Natural killer cell (primary cell): ENCODE measurements at regions of chr2 and their contacts with region 1.

Region 1: DNA sequence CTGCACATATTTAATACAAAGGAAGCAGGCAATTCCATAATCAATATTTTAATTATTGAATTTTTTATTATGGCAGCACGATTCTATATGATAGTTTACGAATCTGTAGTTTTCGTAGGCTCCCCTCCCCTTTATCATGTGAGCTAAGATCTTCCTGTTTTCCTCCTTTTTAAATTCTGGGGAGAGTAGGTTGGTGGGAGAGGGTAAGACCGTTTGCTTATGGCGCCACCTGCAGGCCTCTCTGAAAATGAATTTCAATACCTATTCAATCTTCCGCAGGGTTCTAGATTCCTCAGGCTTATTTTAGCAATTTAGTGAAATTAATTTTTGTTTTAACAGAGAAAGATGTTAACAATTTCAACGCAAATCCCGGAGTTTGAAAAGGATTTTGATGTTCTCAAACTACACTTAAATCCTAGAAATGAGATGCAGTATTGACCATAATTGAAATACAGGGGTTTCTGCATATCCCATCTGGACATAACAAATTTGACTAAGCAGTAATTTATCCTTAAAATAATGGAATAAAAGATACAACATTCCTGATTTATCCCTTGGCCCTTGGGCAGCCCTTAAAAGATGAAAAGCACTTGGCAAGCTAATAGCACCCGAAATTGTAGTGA is 12.8 kb upstream of the GBX2 start:
- DNase-seq: peak in 1 of 2 donors; percentile 58
- ATAC-seq: no peak
- H3K4me3 ChIP-seq: no peak overlapping the region
- H3K4me3 Mint-ChIP-seq: peak overlapping the region; percentile 36
- H3K27ac ChIP-seq: no peak overlapping the region
- H3K27ac Mint-ChIP-seq: no peak overlapping the region
- H3K4me1 ChIP-seq: peaks cover 13% of the 10 kb centered on the region
- H3K4me1 Mint-ChIP-seq: peaks cover 5 to 6% of the 10 kb centered on the region in 2 donors
- H3K27me3 ChIP-seq: peaks cover 35% of the 10 kb centered on the region
- H3K27me3 Mint-ChIP-seq: peaks cover 41 to 49% of the 10 kb centered on the region in 2 donors
- CTCF ChIP-seq: peak; percentile 73

Region 2: GRCh38 chr2:235766278-235766677 is 414.7 kb before region 1 on chr2:
- intact Hi-C with region 1: loop called (anchors 1 kb)
- DNase-seq: peak in 1 of 2 donors; percentile 72
- ATAC-seq: peak; percentile 49 to 86 (median 62)
- H3K4me3 ChIP-seq: no peak overlapping the region
- H3K4me3 Mint-ChIP-seq: no peak overlapping the region
- H3K27ac ChIP-seq: no peak overlapping the region
- H3K27ac Mint-ChIP-seq: no peak overlapping the region
- H3K4me1 ChIP-seq: no peaks in the 10 kb centered on the region
- H3K4me1 Mint-ChIP-seq: peaks cover 4 to 5% of the 10 kb centered on the region in 2 donors
- H3K27me3 ChIP-seq: no peaks in the 10 kb centered on the region
- H3K27me3 Mint-ChIP-seq: no peaks in the 10 kb centered on the region
- CTCF ChIP-seq: peak; percentile 97

Region 3: GRCh38 chr2:235779444-235779896 is 401.5 kb before region 1 on chr2:
- intact Hi-C with region 1: loop called (anchors 1 kb)
- DNase-seq: peak; percentile 22 to 64
- ATAC-seq: peak in 2 of 3 donors; percentile 54 to 75
- H3K4me3 ChIP-seq: no peak overlapping the region
- H3K4me3 Mint-ChIP-seq: no peak overlapping the region
- H3K27ac ChIP-seq: no peak overlapping the region
- H3K27ac Mint-ChIP-seq: no peak overlapping the region
- H3K4me1 ChIP-seq: no peaks in the 10 kb centered on the region
- H3K4me1 Mint-ChIP-seq: no peaks in the 10 kb centered on the region
- H3K27me3 ChIP-seq: no peaks in the 10 kb centered on the region
- H3K27me3 Mint-ChIP-seq: no peaks in the 10 kb centered on the region
- CTCF ChIP-seq: peak; percentile 50